ENCODE measurements at regions of chr6 and their contacts with region 1.

Region 1: DNA sequence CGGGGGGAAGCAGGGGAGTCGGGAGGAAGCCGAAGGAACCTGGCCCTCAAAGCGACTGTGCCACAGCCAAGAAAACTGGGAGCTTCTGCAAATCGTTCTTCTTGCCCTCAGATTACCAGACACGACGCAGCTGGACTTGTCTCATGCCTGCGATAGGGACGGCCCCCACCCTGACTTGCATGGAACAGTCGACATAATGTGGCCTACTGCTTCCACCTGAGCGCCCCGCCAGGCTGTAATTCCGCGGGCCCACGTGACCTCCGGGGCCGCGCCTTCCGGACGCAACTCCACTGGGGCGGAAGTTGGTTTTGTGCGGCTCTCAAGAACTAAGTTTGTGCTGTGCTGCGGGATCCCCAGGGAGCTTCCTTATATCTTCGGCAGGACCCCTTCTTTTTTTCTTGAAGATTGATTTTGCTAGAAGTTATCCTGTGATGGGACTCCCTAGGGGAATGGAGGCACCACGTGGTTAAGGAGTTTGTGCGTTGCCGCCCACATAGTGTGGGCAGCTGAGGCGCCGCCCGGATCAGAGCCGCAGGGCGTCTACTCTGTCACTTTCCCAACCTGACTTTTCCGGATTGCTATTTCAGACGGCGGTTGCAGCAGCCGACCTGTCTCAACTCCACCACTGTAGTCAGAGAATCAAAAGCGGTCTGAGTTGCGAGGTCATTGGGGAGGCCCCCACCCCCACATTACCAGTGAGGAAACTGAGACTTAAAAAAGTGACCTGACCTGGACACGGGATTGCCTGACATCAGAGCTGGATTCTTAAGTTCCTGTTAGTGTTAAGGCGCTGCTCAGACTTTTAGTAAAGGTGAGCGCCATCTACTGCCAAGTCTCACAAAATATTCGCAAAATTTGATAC is 540 bp upstream of the CD164 start:
- DNase-seq: peak; percentile 99
- H3K4me3 ChIP-seq: peak overlapping the region; percentile 83 to 96 (median 88)
- H3K27ac ChIP-seq: peak overlapping the region; percentile 94 to 100 (median 100)
- H3K4me1 ChIP-seq: peaks cover 32 to 67% (median 48%) of the 10 kb centered on the region in 6 donors
- H3K27me3 ChIP-seq: no peaks in the 10 kb centered on the region
- CTCF ChIP-seq: peak in 10 of 11 experiments; percentile 6 to 70 (median 57)
- POLR2A ChIP-seq: peak in 2 of 3 donors; percentile 3 to 56

Region 2: DNA sequence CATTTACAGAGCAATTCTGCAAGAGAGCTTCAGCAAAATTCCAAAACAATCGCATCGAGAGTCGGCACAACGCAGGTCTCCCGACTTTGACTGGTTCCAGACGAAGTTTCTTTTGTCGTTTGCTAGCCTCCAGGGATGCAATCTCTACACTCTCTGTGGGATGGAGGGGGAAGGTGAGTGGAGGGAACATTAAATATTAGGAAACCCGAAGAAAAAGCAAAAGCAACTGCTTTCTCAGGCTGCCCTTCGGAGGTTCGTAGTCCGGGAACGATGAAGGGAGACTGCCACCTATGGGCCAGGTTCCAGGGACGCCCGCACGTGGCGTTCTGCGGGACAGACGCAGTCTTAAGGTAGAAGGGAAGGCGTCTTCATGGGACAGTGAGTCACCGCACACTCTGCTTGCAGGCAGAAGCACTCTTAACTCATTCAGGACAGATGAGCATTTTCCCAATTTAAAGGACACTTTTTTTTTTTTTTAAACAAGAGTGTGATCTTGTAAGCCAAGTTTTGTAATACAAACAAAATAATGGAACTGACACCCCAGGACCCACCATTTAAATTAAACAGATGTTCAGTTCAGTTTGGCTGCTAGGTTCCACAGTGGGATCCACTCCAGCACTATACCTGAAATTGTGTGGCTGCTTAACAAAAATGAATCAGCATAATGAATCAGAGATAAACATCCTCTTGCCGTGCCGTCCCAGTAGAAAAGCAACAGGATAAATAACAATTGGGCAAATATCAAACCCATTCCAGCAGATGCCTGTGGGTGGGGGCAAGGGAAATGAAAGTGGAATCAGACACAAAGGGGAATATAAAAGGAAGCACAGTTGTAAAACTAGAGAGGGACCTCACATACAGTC is 600.4 kb before region 1 on chr6:
- intact Hi-C with region 1: no loop called
- DNase-seq: peak; percentile 95
- H3K4me3 ChIP-seq: peak overlapping the region; percentile 24 to 68 (median 38)
- H3K27ac ChIP-seq: peak overlapping the region in 5 of 8 donors; percentile 17 to 54 (median 37)
- H3K4me1 ChIP-seq: peaks cover 10 to 47% (median 30%) of the 10 kb centered on the region in 6 donors
- H3K27me3 ChIP-seq: no peaks in the 10 kb centered on the region
- CTCF ChIP-seq: peak; percentile 66 to 91 (median 83)
- POLR2A ChIP-seq: no peak

Region 3: DNA sequence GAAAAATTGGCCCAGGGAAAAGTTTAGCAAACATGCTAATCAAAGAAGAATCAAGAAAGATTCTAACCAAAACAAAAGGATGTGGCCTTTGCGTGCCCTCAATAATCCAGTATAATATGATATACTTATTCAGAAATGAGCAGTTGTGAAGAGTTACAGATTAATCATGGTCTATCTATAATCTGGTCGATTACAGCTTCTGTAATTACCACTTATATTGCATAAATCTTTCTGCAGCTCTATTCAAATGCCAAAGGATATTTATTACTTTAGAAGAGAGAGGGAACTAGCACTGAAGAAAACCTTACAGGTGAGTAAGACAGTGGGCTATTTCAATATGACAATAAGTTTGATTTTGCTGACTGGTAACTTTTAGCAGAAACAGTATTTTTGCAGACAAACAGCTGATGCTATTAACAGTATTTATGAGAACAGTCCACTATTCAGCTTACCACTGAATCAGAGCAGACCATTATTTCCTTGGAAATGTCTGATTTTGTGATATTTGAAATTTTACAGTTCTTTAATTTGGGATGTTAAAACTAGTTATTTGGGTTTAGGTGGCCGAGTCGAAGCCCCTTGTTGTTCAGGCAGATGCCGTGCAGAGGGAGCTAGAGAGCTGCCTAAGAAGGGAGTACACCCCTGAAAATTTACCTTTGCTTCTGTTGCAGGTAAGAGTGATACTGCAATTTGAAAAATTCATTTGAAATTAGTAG is 195.2 kb before region 1 on chr6:
- intact Hi-C with region 1: loop called (anchors 5 kb)
- DNase-seq: peak; percentile 79
- H3K4me3 ChIP-seq: no peak overlapping the region
- H3K27ac ChIP-seq: no peak overlapping the region
- H3K4me1 ChIP-seq: peaks cover 0 to 19% (median 2%) of the 10 kb centered on the region in 6 donors
- H3K27me3 ChIP-seq: peaks cover 0 to 3% (median 0%) of the 10 kb centered on the region in 7 donors
- CTCF ChIP-seq: peak; percentile 74 to 92 (median 86)
- POLR2A ChIP-seq: no peak

Region 4: GRCh38 chr6:109202409-109203284 is 180.2 kb before region 1 on chr6:
- intact Hi-C with region 1: no loop called
- DNase-seq: no peak
- H3K4me3 ChIP-seq: no peak overlapping the region
- H3K27ac ChIP-seq: no peak overlapping the region
- H3K4me1 ChIP-seq: no peaks in the 10 kb centered on the region
- H3K27me3 ChIP-seq: no peaks in the 10 kb centered on the region
- CTCF ChIP-seq: no peak
- POLR2A ChIP-seq: no peak

Region 5: GRCh38 chr6:109428889-109429477 is 46.2 kb after region 1 on chr6:
- intact Hi-C with region 1: no loop called
- DNase-seq: no peak
- H3K4me3 ChIP-seq: no peak overlapping the region
- H3K27ac ChIP-seq: no peak overlapping the region
- H3K4me1 ChIP-seq: no peaks in the 10 kb centered on the region
- H3K27me3 ChIP-seq: no peaks in the 10 kb centered on the region
- CTCF ChIP-seq: no peak
- POLR2A ChIP-seq: no peak

Region 6: DNA sequence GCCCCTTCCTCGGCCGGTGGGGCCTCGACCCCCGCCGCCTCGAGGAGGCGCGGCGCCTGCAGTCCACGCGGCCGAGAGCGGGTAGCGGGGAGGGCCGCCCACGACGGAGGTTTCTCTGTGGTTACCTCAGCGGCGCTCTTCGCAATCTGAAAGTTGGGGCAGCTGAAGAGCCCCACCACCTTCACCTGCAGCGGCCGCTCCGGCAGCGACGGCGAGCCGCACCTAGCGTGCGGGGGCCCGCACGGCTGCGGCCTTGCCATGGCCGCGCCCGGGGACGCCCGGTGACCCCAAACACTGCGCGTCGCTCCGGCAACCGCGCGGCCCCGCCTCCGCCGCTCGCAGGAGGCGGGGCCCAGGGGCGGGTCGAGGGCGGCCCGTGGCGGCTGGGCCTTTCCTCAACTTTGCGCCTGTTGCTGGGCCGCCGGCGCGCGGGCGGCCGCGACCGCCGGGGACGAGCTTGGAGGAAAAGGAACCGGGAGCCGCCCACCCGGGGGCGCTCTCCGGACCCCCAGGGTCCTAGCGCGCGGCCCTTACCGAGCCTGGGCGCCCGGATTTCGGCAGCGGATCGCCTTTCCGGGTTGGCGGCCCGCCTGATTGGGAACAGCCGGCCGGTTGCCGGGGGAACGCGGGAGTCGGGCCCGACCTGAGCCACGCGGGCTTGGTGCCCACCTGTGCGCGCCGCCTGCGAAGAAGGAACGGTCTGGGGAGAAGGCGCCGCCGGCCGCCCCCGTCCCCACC is 57.7 kb after region 1 on chr6 and contains the starts of genes PPIL6 and SMPD2:
- intact Hi-C with region 1: loop called (anchors 10 kb)
- DNase-seq: peak; percentile 97
- H3K4me3 ChIP-seq: peak within 1 kb of the TSS; percentile 81 to 96 (median 92)
- H3K27ac ChIP-seq: peak within 1 kb of the TSS; percentile 84 to 92 (median 89)
- H3K4me1 ChIP-seq: peaks cover 5 to 47% (median 18%) of the 10 kb centered on the region in 6 donors
- H3K27me3 ChIP-seq: no peaks in the 10 kb centered on the region
- CTCF ChIP-seq: peak in 8 of 11 experiments; percentile 12 to 68 (median 40)
- POLR2A ChIP-seq: peak in 2 of 3 donors; percentile 3 to 5
- total RNA-seq, gene PPIL6: 0.19 to 4.8 (median 0.91) TPM
- total RNA-seq, gene SMPD2: 11.4 to 21.4 (median 18.9) TPM

Region 7: GRCh38 chr6:109513571-109514071 is 130.8 kb after region 1 on chr6:
- intact Hi-C with region 1: no loop called
- DNase-seq: no peak
- H3K4me3 ChIP-seq: no peak overlapping the region
- H3K27ac ChIP-seq: no peak overlapping the region
- H3K4me1 ChIP-seq: peaks cover 0 to 17% (median 4%) of the 10 kb centered on the region in 6 donors
- H3K27me3 ChIP-seq: no peaks in the 10 kb centered on the region
- CTCF ChIP-seq: no peak
- POLR2A ChIP-seq: no peak

Measured in spleen (tissue), 13 donors.